GM10248 (cell line): ENCODE measurements at regions of chr3 and their contacts with region 1.

Region 1: DNA sequence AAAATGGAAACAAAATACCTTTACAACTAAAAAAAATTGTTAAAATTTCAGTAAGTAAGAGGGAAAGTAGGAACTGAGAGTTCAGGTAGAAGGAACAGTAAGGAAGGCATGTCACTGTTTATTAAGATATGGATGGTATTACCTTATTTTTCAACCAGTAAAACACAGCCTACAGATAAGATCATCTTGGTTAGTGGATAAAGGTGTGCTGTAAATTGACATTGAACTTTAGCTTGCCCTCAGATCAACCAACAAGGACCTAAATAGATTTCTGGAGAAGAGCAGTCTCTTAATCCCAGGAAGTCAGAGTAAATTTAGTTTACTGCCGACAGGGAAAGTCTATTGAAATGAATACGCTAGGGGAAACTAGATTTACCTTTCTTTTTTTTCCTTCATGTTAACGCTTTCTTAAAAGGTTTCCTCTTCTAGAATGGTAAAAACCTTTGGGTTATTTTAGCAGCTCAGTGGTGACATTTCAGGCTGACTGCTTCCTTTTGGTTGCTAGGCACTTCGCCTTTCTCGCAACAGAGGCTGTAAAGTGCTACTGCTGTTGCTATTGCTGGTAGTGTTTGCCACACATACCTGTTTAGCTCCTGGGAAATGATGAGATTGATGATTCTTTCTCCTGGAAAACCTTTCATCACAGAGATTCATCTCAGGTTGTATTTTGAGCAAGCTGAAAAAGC is 12.9 kb downstream of the DZIP3 start:
- DNase-seq: peak; percentile 14
- CTCF ChIP-seq: no peak

Region 2: GRCh38 chr3:108505811-108506210 is 96.6 kb before region 1 on chr3:
- CTCF ChIA-PET with region 1: no interaction called
- POLR2A ChIA-PET with region 1: no interaction called
- DNase-seq: no peak
- CTCF ChIP-seq: peak; percentile 17

Region 3: GRCh38 chr3:108589146-108589997 is 13.0 kb before region 1 on chr3 and contains the starts of genes CIP2A and DZIP3:
- CTCF ChIA-PET with region 1: interaction called, 10 read pairs
- POLR2A ChIA-PET with region 1: interaction called, 4 read pairs
- DNase-seq: peak; percentile 92
- CTCF ChIP-seq: no peak

Region 4: DNA sequence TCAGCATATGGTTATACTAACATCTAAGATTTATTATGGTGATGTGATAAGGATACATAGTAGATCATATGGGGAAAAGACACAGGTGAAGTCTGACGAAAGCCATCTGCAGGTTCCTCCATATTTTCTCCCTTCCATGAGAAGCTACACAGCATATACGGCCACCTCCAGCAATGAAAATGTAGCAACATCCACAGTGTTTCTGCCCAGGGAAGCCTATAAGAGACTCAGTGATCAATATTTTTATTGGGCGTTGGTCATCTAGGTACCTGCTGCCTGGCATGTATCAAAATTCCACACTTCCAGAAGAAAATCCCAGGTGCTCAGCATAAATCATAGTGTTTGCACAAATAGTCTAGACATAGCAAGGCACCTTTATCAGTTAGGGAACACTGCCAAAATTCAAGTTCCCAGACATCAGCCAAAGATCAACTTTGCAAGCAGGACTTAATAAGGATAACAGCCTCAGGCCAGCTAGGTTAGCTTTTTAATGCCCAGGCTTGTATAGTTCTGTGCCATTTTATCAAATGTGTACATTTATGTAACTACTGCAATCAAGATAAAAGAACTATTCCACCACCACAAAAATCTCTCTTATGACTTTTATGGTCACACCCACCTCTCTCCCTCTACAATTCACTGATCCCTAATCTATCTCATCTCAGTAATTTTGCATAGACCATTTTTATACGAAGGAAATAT is 17.8 kb after region 1 on chr3:
- CTCF ChIA-PET with region 1: interaction called, 16 read pairs
- POLR2A ChIA-PET with region 1: no interaction called
- DNase-seq: no peak
- CTCF ChIP-seq: no peak